GM10248 (cell line): ENCODE measurements at regions of chr22 and their contacts with region 1.

Region 1: DNA sequence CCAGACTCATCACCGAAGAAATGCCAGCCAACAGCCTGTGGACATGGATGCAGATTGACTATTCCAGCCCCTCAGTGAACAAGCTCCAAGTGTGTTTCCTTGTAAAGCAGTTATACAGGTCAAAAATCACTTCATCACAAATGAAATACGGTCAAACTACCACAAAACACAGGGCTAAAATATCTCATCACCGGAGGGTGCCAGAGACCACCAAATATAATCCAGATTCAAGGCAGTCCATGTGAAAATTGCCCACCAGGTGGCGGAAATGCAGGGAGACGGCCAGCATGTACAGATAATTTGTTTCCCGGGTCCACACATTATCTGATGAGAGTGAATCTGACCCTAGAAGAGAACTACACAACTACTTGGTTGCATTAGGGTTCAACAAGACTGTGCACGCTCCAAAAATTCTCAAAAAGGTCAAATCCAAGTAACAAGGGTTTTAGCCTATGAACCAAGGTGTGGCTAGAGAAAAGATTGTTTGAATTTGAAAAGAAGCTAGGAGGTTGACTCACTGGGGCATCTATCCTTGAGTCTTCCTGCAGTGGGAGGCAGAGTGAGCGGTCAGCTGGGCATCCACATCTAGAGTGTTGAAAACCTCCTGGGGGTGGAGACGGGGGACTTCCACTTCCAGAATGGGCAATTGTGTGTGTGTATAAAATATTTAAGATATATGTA is 71.7 kb downstream of the IGLL5 start:
- DNase-seq: peak; percentile 63
- CTCF ChIP-seq: peak; percentile 88

Region 2: GRCh38 chr22:22753526-22754267 is 205.6 kb before region 1 on chr22:
- CTCF ChIA-PET with region 1: interaction called, 106 read pairs
- POLR2A ChIA-PET with region 1: no interaction called
- DNase-seq: peak; percentile 87
- CTCF ChIP-seq: peak; percentile 89

Region 3: DNA sequence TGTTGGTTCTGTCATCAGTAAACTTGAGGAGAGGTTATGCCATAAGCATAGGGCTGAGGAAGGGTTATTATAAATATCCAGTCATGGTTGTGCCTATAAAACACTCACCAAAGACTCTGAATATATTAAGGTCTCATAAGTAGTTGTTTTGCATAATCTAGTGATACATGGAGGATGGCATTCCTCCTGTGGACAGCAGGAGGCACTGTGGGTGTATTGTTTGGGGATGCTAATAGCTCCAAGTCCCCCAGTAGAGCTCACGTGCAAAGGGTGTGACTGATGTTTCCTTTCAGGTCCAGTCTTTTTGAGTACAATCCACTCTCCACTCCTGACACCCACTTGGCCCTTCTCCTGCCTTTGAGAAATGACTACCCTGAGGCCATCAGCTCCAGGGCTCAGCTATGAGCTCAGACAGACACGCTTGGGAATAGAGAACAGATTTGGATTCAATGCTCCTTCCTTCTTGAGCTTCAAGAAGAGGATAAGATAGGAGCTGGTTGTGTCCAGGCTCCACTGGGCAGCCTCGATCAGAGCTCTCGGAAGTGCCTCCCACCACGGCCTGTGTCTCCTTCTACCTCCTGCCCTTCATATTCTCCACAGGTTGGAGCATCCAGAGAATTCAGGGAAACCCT is 156.8 kb before region 1 on chr22:
- CTCF ChIA-PET with region 1: interaction called, 12 read pairs
- POLR2A ChIA-PET with region 1: no interaction called
- DNase-seq: peak; percentile 39
- CTCF ChIP-seq: peak; percentile 16

Region 4: DNA sequence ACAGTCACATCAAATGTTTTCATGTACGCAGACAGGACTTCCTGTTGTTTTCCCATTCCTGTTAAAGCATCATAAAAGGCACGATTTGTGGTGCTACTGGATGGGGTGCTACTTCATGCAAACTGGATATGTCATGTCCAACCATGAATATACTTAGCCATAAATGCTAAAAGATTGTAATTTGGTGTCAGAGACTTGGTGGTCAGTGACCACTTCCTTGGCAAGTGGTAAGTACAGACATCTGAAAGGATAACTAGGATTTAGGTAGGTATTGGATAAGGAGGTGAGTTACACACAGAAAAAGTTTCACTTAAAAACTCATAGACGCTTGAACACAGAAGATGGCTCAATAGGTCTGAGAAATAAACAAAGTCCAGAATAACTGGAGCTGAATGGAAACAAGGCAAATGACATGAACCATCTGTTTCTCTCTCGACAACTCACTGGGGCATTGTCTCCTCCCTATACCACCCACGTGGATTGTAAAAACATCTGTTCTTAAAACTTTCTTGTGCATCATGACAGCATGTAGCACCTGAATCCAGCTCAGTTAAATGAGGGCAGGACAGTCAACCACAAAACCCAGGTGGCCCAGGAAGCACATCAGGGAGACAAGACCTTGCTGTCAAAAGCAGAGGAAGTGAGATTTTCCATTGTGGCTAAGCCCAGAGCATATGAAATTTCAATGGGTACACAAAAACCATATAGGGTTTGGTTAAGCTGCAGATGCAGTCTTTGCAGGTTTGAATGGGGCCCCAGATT is 93.8 kb before region 1 on chr22:
- CTCF ChIA-PET with region 1: interaction called, 12 read pairs
- POLR2A ChIA-PET with region 1: no interaction called
- DNase-seq: peak; percentile 45
- CTCF ChIP-seq: no peak

Region 5: DNA sequence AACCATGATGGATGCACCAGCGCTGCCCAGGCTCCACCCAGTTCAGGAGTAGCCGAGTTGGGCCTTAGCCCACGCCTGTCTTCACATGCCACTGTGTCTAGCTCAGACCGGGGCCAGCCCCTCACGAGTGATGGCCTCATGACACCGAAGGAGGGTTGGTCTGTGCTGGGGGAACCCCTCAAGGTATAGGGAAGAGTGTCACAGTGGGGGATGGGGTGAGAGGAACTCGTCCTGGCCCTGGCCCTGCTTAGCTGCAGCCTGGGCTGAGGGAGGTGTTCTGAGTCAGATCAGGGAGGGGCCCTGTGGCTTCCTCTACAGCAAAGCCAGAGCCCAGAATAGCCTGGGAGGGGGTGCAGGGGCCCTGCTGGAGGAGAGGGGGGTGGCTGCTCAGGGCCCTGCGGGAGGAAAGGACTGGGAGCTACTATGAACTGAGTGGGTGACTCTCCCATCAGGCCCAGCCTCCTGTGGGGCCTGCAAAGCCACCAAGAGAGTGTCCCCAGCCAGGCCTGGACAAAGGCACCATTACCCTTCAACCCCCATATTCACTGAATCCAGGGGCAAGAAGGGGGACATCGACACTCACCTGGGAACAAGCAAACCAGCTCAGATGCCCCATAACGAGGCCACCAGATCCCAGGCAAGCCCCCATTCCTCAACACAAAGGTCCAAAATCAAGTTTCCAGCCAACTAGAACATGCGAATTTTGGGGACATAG is 30.5 kb before region 1 on chr22:
- CTCF ChIA-PET with region 1: interaction called, 27 read pairs
- POLR2A ChIA-PET with region 1: no interaction called
- DNase-seq: peak; percentile 89
- CTCF ChIP-seq: no peak

Region 6: DNA sequence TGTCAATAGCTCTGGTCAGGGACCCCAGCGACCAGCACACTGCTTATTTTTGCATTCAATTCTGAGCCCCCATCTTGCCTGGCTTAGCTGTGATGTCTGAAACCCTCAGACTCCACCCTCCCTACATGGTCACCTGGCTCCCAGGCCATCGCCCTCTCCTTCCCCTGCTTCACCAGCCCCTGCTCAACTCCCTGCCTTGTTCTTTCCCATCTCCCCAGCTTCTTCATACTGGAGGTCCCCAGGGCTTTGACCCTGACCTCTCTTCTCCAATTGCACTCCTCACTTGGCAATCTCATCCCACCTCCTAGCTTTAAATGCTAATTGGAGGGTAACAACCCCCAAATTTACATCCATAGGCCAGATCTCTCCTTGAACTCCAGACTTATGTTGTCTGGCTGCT is 26.7 kb after region 1 on chr22:
- CTCF ChIA-PET with region 1: no interaction called
- POLR2A ChIA-PET with region 1: no interaction called
- DNase-seq: no peak
- CTCF ChIP-seq: no peak

Region 7: DNA sequence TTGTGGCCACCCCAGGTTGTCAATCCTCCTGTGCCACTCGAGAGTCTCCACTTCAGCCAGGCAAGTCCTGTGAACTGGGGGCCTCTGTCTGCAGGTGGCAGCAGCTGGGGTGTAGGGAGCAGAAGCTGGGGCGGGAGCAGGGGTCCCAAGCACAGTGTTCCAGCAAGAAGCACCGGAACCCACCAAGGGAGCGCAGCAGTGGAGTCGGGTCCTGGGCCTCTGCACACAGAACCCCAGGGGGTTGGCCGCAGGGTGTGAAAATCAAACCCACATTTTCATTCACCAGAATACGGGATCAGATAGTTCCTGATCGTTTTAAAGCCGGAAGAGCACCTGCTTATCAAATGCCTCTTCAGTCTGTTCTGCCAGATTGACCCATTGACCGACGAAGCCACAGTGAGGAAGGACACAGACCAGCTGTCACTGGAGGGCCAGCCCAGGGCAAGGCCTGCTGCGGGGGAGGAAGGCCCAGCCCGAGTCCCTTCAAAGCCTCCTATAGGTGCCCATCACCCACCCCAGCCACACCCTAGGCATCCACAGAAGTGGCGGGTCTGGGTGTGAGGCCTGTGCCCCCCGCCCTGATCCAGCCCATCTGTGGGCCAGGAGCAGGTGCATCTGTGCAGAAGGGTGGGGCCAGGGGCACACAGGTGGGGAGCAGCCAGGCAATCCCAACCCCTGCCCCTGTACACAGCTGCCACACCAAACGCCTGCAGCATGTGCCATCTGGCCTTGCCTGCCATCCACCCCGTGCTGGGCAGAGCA is 148.4 kb after region 1 on chr22:
- CTCF ChIA-PET with region 1: interaction called, 11 read pairs
- POLR2A ChIA-PET with region 1: no interaction called
- DNase-seq: no peak
- CTCF ChIP-seq: no peak

Region 8: DNA sequence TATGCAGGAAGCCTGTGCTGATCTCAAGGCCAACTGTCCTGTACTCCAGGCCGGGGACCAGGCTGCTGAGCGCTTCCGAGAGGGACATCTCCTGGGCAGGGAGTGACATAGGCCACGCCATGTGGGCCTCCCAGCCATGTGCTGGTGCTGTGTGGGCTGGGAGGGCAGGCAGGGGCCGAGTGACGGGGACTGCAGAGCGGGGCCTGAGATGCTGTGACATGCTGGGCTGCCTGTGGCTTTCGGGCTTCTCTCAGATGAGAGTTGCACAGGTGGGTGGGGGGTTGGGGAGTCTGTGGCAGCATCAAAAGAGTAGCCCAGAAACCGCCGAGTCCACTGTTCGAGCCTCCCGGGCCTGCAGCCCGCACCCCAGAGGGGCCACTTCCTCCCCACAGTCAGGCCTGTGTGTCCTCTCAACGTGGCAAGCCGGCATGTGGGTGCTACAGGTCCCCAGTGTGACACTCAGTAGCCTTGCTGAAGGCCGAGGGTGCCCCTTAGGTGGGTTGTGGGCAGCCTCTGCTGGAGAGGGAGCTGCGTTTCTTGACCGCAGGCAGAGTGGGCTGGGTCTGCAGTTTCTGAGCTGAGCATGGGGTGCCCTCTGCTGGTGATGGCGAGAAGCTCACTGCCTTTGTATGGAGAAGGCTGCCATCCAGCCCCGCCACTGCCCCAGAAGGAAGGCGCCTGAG is 322.3 kb after region 1 on chr22:
- CTCF ChIA-PET with region 1: interaction called, 53 read pairs
- POLR2A ChIA-PET with region 1: no interaction called
- DNase-seq: peak; percentile 91
- CTCF ChIP-seq: peak; percentile 87